ENCODE measurements at regions of chr15 and their contacts with region 1.

Region 1: DNA sequence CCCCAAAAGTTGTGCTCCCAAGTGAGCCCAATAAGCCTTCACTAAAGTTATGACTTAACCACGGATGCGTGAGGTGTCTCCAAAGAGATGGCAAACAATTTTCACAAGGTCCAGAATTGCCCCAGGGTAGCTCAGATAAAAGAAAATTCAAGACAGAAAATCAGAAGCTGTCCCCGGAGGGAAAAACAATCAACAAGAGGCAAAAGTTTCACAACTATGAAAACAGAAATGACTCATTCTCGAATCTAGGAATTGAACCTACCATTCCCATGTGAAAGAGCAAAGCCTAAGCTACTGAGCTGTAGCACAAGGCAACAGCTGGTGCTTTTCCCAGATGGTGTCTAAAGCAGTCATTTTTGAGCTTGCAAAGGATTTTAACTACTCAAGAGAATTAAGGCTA is 33.5 kb upstream of the MKRN3 start:
- DNase-seq: no peak
- ATAC-seq: no peak
- H3K4me3 ChIP-seq: no peak overlapping the region
- H3K27ac ChIP-seq: no peak overlapping the region
- H3K4me1 ChIP-seq: no peaks in the 10 kb centered on the region
- H3K27me3 ChIP-seq: no peaks in the 10 kb centered on the region

Region 2: GRCh38 chr15:23565395-23566070 is 33.5 kb after region 1 on chr15 and contains the start of gene MKRN3:
- intact Hi-C with region 1: loop called in 1 of 2 experiments (anchors 5 kb)
- DNase-seq: no peak
- ATAC-seq: peak; percentile 48
- H3K4me3 ChIP-seq: peak within 1 kb of the TSS in 1 of 2 donors; percentile 1
- H3K27ac ChIP-seq: no peak within 1 kb of the TSS
- H3K4me1 ChIP-seq: no peaks in the 10 kb centered on the region
- H3K27me3 ChIP-seq: no peaks in the 10 kb centered on the region
- total RNA-seq, gene MKRN3: 1.6 TPM in 1 of 2 donors, not detected in the other

Measured in aorta (tissue), 5 donors.